T-cell (primary cell): ENCODE measurements at regions of chr19 and their contacts with region 1.

Region 1: DNA sequence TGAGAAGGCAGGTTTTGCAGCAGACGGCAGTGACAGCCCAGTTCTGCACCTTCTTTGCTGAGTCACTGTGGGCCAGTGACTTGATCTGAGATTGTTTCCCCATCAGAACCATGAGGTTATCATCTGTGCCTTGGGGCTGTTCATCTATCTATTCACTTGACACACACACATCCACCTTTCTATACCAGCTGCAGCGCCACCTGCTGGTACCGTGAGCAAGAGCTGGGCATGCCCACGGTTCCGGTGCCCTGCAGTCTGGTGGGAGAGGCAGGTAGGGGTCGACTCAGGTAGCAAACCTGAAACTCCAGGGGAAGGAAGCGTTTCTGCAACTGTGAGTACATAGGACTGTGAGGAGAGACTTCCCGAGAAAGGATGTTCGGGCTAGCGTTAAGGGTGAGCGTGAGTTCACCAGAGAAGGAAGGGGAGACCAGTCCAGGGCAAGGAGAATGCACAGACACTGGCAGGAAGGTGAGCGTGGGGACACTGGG is 7.5 kb upstream of the LIN7B start:
- DNase-seq: peak; percentile 32 to 81 (median 57)
- ATAC-seq: peak; percentile 75 to 76 (median 75)
- H3K4me3 ChIP-seq: no peak overlapping the region
- H3K4me3 Mint-ChIP-seq: no peak overlapping the region
- H3K27ac ChIP-seq: no peak overlapping the region
- H3K27ac Mint-ChIP-seq: peak overlapping the region in 1 of 2 donors; percentile 40
- H3K4me1 ChIP-seq: no peaks in the 10 kb centered on the region
- H3K4me1 Mint-ChIP-seq: peaks cover 5 to 9% (median 6%) of the 10 kb centered on the region in 3 donors
- H3K27me3 ChIP-seq: peaks cover 0 to 3% of the 10 kb centered on the region in 2 experiments
- H3K27me3 Mint-ChIP-seq: no peaks in the 10 kb centered on the region

Region 2: GRCh38 chr19:49019242-49019932 is 87.3 kb before region 1 on chr19:
- CTCF ChIA-PET with region 1: no interaction called
- POLR2A ChIA-PET with region 1: no interaction called
- DNase-seq: peak in 33 of 35 experiments; percentile 19 to 72 (median 45)
- ATAC-seq: peak; percentile 41 to 49 (median 46)
- H3K4me3 ChIP-seq: peak overlapping the region; percentile 64 to 68
- H3K4me3 Mint-ChIP-seq: peak overlapping the region; percentile 83 to 95 (median 86)
- H3K27ac ChIP-seq: no peak overlapping the region
- H3K27ac Mint-ChIP-seq: peak overlapping the region in 1 of 2 donors; percentile 25
- H3K4me1 ChIP-seq: peaks cover 7 to 33% of the 10 kb centered on the region in 2 experiments
- H3K4me1 Mint-ChIP-seq: peaks cover 19 to 32% (median 25%) of the 10 kb centered on the region in 3 donors
- H3K27me3 ChIP-seq: peaks cover 0 to 15% of the 10 kb centered on the region in 2 experiments
- H3K27me3 Mint-ChIP-seq: peaks cover 0 to 6% of the 10 kb centered on the region in 2 donors

Region 3: DNA sequence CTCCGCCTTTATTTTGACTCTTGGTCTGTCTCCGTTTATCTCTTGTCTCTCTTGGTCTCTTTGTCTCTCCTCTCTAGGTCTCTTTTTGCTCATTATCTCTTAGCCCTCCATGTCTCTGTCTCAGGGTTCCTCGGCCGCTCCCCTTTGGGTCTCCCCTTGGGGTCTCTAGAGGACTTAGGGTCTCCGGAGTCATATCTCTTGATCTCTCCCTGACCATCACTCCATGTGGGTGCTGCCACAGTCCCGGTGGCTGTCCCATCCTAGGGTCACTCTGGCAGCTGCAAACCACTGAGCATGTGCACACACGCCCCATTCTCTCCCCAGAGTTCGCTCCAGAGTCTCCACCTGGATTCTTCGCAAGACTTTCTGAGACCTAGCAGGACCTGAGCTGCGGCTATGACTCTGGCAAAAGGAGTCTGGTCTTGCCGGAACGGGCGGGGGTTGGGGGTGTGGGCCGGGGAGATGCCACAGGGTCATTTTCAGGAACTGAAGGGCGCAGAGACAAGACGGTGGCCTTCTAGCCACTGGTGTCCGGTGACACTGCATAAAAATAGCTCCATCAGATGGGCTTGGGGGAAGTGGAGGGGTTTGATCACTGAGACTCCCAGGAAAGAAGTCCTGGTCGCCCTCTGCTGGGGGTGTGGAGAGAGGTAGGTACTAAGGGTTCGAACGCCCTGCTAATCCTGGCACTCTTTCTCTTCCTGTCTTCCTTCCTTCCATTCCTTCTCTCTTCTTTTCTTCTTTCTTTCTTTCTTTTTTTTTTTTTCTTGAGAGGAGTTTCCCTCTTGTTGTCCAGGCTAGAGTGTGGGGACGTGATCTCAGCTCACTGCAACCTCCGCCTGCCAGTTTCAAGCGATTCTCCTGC is 32.9 kb before region 1 on chr19:
- CTCF ChIA-PET with region 1: no interaction called
- POLR2A ChIA-PET with region 1: no interaction called
- DNase-seq: no peak
- ATAC-seq: no peak
- H3K4me3 ChIP-seq: no peak overlapping the region
- H3K4me3 Mint-ChIP-seq: peak overlapping the region in 2 of 3 donors; percentile 14 to 74
- H3K27ac ChIP-seq: no peak overlapping the region
- H3K27ac Mint-ChIP-seq: no peak overlapping the region
- H3K4me1 ChIP-seq: peaks cover 0 to 12% of the 10 kb centered on the region in 2 experiments
- H3K4me1 Mint-ChIP-seq: peaks cover 10 to 17% (median 12%) of the 10 kb centered on the region in 3 donors
- H3K27me3 ChIP-seq: peaks cover 5 to 78% of the 10 kb centered on the region in 2 experiments
- H3K27me3 Mint-ChIP-seq: peaks cover 53 to 70% of the 10 kb centered on the region in 2 donors

Region 4: DNA sequence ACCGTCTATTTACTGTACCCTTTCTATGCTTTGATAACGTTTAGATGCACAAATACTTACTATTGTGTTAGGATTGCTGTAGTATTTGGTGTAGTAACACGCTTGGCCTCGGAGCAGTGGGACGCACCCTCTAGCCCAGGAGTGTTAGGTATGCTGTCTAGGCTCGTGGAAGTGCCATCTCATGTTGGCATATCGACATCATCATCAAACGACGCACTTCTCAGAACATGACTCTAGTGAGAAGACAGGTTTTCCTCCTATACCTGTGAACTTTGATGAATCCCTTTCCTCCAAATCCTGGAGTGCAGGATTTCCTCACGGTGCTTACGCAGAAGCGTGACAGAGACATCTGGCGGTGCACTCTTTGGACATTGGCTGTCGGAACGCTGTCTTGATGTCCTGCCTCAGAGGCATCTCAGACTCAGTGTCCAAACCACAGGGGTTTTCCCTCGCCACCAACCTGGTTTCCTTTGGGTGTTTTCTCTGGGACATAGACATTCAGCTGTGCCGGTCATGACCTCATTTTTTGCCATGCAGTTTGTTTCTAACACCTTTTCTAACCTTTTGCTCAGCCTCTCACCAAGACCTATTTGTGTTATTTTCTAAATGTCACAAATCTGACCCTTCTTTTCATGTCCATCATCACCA is 15.2 kb before region 1 on chr19:
- CTCF ChIA-PET with region 1: interaction called in 1 of 2 experiments, 3 read pairs
- POLR2A ChIA-PET with region 1: interaction called in 1 of 2 experiments, 16 read pairs
- DNase-seq: no peak
- ATAC-seq: no peak
- H3K4me3 ChIP-seq: no peak overlapping the region
- H3K4me3 Mint-ChIP-seq: no peak overlapping the region
- H3K27ac ChIP-seq: no peak overlapping the region
- H3K27ac Mint-ChIP-seq: no peak overlapping the region
- H3K4me1 ChIP-seq: peaks cover 3 to 29% of the 10 kb centered on the region in 2 experiments
- H3K4me1 Mint-ChIP-seq: peaks cover 32 to 40% (median 37%) of the 10 kb centered on the region in 3 donors
- H3K27me3 ChIP-seq: no peaks in the 10 kb centered on the region
- H3K27me3 Mint-ChIP-seq: no peaks in the 10 kb centered on the region

Region 5: GRCh38 chr19:49120868-49121267 is 14.2 kb after region 1 on chr19:
- CTCF ChIA-PET with region 1: no interaction called
- POLR2A ChIA-PET with region 1: no interaction called
- DNase-seq: no peak
- ATAC-seq: no peak
- H3K4me3 ChIP-seq: no peak overlapping the region
- H3K4me3 Mint-ChIP-seq: peak overlapping the region; percentile 67 to 84 (median 78)
- H3K27ac ChIP-seq: no peak overlapping the region
- H3K27ac Mint-ChIP-seq: peak overlapping the region in 1 of 2 donors; percentile 41
- H3K4me1 ChIP-seq: peaks cover 3 to 28% of the 10 kb centered on the region in 2 experiments
- H3K4me1 Mint-ChIP-seq: peaks cover 27 to 35% (median 29%) of the 10 kb centered on the region in 3 donors
- H3K27me3 ChIP-seq: peaks cover 0 to 10% of the 10 kb centered on the region in 2 experiments
- H3K27me3 Mint-ChIP-seq: peaks cover 0 to 5% of the 10 kb centered on the region in 2 donors

Region 6: GRCh38 chr19:49243129-49243528 is 136.4 kb after region 1 on chr19:
- CTCF ChIA-PET with region 1: no interaction called
- POLR2A ChIA-PET with region 1: no interaction called
- DNase-seq: no peak
- ATAC-seq: no peak
- H3K4me3 ChIP-seq: no peak overlapping the region
- H3K4me3 Mint-ChIP-seq: no peak overlapping the region
- H3K27ac ChIP-seq: no peak overlapping the region
- H3K27ac Mint-ChIP-seq: no peak overlapping the region
- H3K4me1 ChIP-seq: no peaks in the 10 kb centered on the region
- H3K4me1 Mint-ChIP-seq: no peaks in the 10 kb centered on the region
- H3K27me3 ChIP-seq: peaks cover 0 to 8% of the 10 kb centered on the region in 2 experiments
- H3K27me3 Mint-ChIP-seq: peaks cover 3 to 9% of the 10 kb centered on the region in 2 donors